SK-N-SH (cell line): ENCODE measurements at regions of chr2 and their contacts with region 1.

Region 1: DNA sequence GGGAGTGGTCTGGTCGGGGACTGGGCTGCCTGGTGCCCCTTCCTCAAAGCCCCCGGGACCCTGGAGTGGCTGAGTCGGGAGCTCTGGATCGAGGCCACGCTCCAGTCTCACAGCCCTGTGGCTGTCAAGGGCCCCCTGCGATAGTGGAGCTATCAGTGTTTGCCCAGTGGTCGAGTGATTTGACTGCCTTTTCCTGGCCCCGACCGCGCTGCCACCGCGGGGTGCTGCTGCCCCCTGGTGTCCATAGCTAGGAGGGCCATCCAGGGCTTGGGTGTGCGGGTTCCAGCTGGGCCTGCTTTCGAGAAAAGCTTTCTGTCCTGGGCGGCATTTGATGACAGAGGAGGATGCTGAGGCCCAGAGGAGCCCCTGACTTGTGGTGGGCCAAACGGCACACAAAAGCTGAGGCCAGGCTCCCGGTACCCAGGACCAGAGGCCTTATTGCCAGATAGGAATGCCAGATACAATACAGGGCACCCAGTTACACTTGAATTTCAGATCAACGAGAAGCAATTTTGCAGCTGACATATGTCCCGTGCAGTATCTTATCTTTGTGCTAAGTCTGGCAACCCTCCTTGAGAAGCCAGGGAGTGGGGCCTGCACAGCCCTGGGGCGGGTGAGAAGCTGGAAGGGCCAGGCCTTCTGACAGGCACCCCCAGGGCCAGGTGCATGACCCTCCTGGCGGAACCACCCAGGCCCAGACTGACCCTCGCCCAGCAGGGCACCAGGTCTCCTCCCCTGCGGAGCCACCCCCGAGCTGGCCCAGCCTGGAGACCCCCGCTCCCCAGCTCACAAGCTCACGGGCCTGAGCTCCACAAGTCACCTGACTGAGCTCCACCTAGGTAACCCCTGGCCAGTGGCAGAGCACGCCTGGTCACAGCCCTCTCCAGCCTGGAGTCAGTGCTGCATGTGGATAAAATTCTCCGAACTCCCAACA is 13.0 kb downstream of the ODC1 start:
- DNase-seq: peak; percentile 99
- H3K4me3 ChIP-seq: no peak overlapping the region; a peak in 1 of 4 replicates
- H3K27ac ChIP-seq: no peak overlapping the region
- H3K4me1 ChIP-seq: peaks cover 0 to 4% of the 10 kb centered on the region in 2 experiments; a peak in 1 of 4 replicates
- H3K27me3 ChIP-seq: no peaks in the 10 kb centered on the region
- CTCF ChIP-seq: peak; percentile 98
- EP300 ChIP-seq: no peak
- RAD21 ChIP-seq: peak; percentile 100

Region 2: GRCh38 chr2:9656270-9656766 is 778.8 kb before region 1 on chr2:
- CTCF ChIA-PET with region 1: no interaction called
- POLR2A ChIA-PET with region 1: no interaction called
- DNase-seq: no peak
- H3K4me3 ChIP-seq: peak overlapping the region in 1 of 2 experiments; percentile 26; a peak in 2 of 4 replicates
- H3K27ac ChIP-seq: peak overlapping the region in 1 of 2 experiments; percentile 98; a peak in 2 of 4 replicates
- H3K4me1 ChIP-seq: peaks cover 7 to 40% of the 10 kb centered on the region in 2 experiments; a peak in 3 of 4 replicates
- H3K27me3 ChIP-seq: no peaks in the 10 kb centered on the region
- CTCF ChIP-seq: no peak
- EP300 ChIP-seq: peak; percentile 8 to 91; a peak in 2 of 4 replicates
- RAD21 ChIP-seq: no peak

Region 3: GRCh38 chr2:9799665-9800632 is 635.2 kb before region 1 on chr2:
- CTCF ChIA-PET with region 1: interaction called, 12 read pairs
- POLR2A ChIA-PET with region 1: no interaction called
- DNase-seq: peak; percentile 98
- H3K4me3 ChIP-seq: no peak overlapping the region; a peak in 1 of 4 replicates
- H3K27ac ChIP-seq: no peak overlapping the region
- H3K4me1 ChIP-seq: peaks cover 8 to 15% of the 10 kb centered on the region in 2 experiments; a peak in 3 of 4 replicates
- H3K27me3 ChIP-seq: no peaks in the 10 kb centered on the region
- CTCF ChIP-seq: peak; percentile 99
- EP300 ChIP-seq: no peak
- RAD21 ChIP-seq: peak; percentile 96

Region 4: DNA sequence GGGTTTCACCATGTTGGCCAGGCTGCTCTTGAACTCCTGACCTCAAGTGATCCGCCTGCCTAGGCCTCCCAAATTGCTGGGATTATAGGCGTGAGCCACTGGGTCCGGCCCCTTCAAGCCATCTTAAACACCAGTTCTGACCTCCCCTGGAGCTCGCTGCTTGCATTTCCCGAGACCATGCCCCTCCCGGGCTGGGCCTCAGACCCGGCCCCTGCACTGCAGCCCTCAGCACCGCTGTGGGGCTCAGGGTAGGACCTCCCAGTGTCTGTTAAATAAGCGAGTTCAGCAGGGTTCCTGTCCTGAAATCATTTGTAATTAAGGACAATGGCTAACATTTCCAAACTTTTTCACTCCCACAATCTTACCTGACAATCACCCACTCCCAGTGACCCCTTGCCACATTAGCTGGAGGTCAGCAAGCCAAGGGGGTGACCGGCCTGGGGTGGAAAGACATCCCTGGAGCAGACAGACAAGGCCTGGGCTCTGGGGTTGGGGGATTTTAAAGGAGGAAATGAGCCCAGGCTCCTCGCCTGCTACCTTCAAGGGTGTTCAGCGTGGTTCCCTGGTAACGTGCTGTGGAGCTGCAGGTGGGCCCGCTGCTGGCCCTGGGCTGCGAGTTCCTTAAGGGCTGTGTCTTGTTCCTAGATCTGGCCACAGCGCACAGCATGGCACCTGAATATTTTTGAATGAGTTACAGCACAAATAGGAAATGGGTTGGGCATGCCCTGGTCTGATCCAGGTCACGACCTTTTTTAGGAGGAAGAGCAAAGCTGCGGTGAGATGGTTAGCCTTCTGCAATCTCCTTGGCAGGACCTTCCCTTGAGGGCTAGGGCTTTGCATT is 370.0 kb before region 1 on chr2:
- CTCF ChIA-PET with region 1: interaction called, 373 read pairs
- POLR2A ChIA-PET with region 1: interaction called, 3 read pairs
- DNase-seq: no peak
- H3K4me3 ChIP-seq: no peak overlapping the region
- H3K27ac ChIP-seq: no peak overlapping the region
- H3K4me1 ChIP-seq: peaks cover 0 to 8% of the 10 kb centered on the region in 2 experiments; a peak in 1 of 4 replicates
- H3K27me3 ChIP-seq: no peaks in the 10 kb centered on the region
- CTCF ChIP-seq: no peak
- EP300 ChIP-seq: no peak
- RAD21 ChIP-seq: no peak

Region 5: GRCh38 chr2:10097352-10098148 is 337.6 kb before region 1 on chr2:
- CTCF ChIA-PET with region 1: interaction called, 19 read pairs
- POLR2A ChIA-PET with region 1: no interaction called
- DNase-seq: peak; percentile 91
- H3K4me3 ChIP-seq: no peak overlapping the region
- H3K27ac ChIP-seq: no peak overlapping the region
- H3K4me1 ChIP-seq: peaks cover 0 to 13% of the 10 kb centered on the region in 2 experiments; a peak in 1 of 4 replicates
- H3K27me3 ChIP-seq: no peaks in the 10 kb centered on the region
- CTCF ChIP-seq: peak; percentile 96
- EP300 ChIP-seq: no peak
- RAD21 ChIP-seq: peak; percentile 83

Region 6: GRCh38 chr2:10249798-10250197 is 185.4 kb before region 1 on chr2:
- CTCF ChIA-PET with region 1: no interaction called
- POLR2A ChIA-PET with region 1: no interaction called
- DNase-seq: no peak
- H3K4me3 ChIP-seq: no peak overlapping the region
- H3K27ac ChIP-seq: no peak overlapping the region
- H3K4me1 ChIP-seq: peaks cover 0 to 11% of the 10 kb centered on the region in 2 experiments; a peak in 1 of 4 replicates
- H3K27me3 ChIP-seq: no peaks in the 10 kb centered on the region
- CTCF ChIP-seq: no peak
- EP300 ChIP-seq: no peak
- RAD21 ChIP-seq: no peak

Region 7: DNA sequence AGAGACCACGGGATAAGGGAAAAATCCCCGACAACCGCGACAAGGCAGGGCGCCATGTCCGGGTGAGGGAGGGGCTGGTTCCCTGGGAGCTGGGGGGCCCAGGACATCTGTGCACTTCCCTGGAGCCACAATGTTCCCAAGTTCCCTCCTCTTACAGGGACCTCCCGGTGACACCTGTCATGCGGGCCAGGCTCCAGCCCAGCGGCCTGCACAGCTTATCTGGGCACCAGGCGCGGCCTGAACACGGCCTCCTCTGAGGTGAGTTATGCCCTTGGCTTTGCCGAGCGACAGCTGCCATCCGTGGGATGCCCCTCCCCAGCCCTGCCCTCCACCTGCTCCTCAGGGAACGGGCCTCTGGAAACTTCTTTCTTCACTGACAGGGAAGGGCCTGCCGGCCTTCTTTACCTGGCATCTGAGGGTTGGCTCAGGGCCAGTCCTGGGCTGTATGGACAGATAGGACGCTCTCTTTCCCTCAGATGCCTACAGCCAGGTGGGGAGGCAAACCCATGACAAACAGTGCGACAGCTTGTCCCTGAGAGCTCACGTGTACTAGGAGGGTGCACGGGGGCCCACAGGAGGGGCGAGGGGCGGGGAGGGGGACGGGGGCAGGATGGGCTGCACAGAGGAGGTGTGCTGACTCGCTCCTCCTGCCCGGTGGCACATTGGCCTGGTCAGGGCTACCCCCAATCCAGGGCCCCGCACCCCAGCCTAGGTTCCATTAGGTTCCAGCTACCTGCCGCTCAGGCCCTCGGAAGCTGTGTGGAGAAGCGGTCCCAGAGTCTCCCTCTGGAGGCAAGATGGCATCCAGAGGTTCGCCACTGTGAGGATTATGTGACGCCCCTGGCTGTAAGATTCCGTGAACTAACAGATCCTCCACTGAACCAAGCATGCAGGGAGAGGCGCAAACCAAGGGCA is 167.3 kb before region 1 on chr2:
- CTCF ChIA-PET with region 1: interaction called, 14 read pairs
- POLR2A ChIA-PET with region 1: no interaction called
- DNase-seq: no peak
- H3K4me3 ChIP-seq: no peak overlapping the region
- H3K27ac ChIP-seq: no peak overlapping the region
- H3K4me1 ChIP-seq: peaks cover 4 to 7% of the 10 kb centered on the region in 2 experiments; a peak in 2 of 4 replicates
- H3K27me3 ChIP-seq: no peaks in the 10 kb centered on the region
- CTCF ChIP-seq: no peak
- EP300 ChIP-seq: no peak
- RAD21 ChIP-seq: no peak

Region 8: GRCh38 chr2:10408649-10409579 is 26.2 kb before region 1 on chr2:
- CTCF ChIA-PET with region 1: interaction called, 73 read pairs
- POLR2A ChIA-PET with region 1: no interaction called
- DNase-seq: peak; percentile 97
- H3K4me3 ChIP-seq: peak overlapping the region in 1 of 2 experiments; percentile 26; a peak in 1 of 4 replicates
- H3K27ac ChIP-seq: peak overlapping the region in 1 of 2 experiments; percentile 62; a peak in 2 of 4 replicates
- H3K4me1 ChIP-seq: peaks cover 34 to 55% of the 10 kb centered on the region in 2 experiments
- H3K27me3 ChIP-seq: no peaks in the 10 kb centered on the region
- CTCF ChIP-seq: peak; percentile 99
- EP300 ChIP-seq: no peak
- RAD21 ChIP-seq: peak; percentile 99

Region 9: DNA sequence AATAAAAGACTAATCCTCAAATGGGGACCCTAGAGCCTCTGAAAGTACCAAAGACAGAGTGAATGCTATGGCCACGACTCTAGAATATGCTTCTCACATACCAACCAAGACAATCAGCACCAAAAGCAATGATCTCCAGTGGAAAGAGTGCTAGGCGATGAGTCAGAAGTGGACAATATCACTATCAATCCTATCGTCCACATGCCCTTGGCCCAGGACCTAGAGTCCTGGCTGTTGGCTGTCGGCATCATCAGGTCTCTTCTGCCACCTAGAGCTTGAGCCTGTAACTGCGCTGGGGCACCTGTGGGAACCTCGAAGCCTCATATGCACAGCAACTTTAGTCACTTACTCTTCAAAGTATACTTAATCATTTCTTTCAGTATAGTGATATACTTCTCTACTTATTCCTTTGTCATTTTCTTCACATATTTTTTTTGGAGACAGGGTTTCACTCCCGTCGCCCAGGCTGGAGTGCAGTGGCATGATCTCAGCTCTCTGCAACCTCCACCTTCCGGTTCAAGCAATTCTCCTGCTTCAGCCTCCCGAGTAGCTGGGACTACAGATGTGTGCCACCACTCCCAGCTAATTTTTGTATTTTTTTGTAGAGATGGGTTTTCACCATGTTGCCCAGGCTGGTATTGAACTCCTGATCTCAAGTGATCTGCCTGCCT is 224.9 kb after region 1 on chr2:
- CTCF ChIA-PET with region 1: interaction called, 20 read pairs
- POLR2A ChIA-PET with region 1: no interaction called
- DNase-seq: peak; percentile 70
- H3K4me3 ChIP-seq: no peak overlapping the region
- H3K27ac ChIP-seq: peak overlapping the region in 1 of 2 experiments; percentile 68; a peak in 2 of 4 replicates
- H3K4me1 ChIP-seq: 0 out of 4 replicates have a peak, but pooled peaks cover 0 to 8% of the 10 kb centered on the region in 2 experiments
- H3K27me3 ChIP-seq: no peaks in the 10 kb centered on the region
- CTCF ChIP-seq: peak; percentile 91
- EP300 ChIP-seq: peak in 1 of 2 experiments; percentile 21; a peak in 1 of 4 replicates
- RAD21 ChIP-seq: peak; percentile 85